AG04450 (cell line): ENCODE measurements at regions of chr10 and their contacts with region 1.

Region 1: DNA sequence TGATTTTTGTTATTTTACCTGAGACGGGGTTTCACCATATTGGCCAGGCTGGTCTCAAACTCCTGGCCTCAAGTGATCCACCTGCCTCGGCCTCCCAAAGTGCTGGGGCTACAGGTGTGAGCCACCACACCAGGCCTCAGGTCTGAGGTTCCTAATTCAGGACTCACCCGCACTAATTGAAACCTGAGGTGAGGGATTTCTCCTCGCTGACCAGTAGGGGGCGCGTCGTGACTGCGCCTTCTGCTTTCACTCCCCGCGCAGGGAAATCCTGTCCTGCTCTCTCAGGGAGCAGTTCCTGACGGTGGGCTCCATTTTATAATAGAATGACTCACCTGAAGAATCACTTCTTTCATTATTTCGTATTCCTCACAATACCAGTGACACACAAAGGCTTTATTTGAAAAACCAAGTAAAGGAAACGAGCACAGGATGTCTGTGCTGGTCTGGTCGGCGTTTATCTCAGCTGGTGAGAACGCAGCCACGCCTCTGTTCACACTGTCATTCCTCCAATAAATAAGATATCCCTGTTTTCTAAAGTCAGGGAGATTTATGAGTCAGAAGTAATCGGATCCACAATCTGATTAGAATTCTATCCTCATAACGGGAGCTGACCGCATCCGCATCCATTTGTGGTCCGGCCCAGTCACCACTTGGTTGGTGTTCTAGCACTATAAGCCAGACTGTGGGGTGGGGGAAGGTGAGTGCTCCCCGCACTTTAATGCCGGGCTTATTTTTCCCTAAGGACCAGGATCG is 35.4 kb downstream of the BAG3 start:
- DNase-seq: peak; percentile 69
- H3K4me3 ChIP-seq: peak overlapping the region; percentile 54
- H3K27ac ChIP-seq: peak overlapping the region; percentile 81
- H3K27me3 ChIP-seq: no peaks in the 10 kb centered on the region
- CTCF ChIP-seq: peak; percentile 86

Region 2: GRCh38 chr10:119478811-119479341 is 207.7 kb before region 1 on chr10:
- CTCF ChIA-PET with region 1: no interaction called
- POLR2A ChIA-PET with region 1: no interaction called
- DNase-seq: no peak
- H3K4me3 ChIP-seq: no peak overlapping the region
- H3K27ac ChIP-seq: no peak overlapping the region
- H3K27me3 ChIP-seq: peaks cover 39% of the 10 kb centered on the region
- CTCF ChIP-seq: no peak

Region 3: DNA sequence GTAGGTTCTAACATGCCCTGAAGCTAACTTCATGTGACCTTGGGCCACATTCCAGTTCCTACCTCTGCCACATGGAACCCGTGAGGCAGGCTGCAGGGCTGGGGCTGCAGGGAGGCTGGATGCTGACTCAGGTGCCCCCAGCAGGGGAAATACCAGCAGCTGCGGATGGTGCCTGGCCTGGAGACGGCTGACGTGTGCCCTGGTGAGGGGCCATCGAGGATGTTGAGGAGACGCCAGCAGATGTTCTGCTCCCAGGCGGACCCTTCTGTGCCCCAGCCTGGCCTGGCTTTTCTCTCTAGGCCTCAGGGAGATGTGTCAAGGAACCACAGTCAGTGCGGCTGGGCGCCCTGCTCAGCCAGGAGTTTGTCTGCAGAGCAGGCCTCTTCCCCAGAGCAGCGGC is 26.7 kb before region 1 on chr10:
- CTCF ChIA-PET with region 1: no interaction called
- POLR2A ChIA-PET with region 1: no interaction called
- DNase-seq: no peak
- H3K4me3 ChIP-seq: no peak overlapping the region
- H3K27ac ChIP-seq: no peak overlapping the region
- H3K27me3 ChIP-seq: no peaks in the 10 kb centered on the region
- CTCF ChIP-seq: no peak

Region 4: DNA sequence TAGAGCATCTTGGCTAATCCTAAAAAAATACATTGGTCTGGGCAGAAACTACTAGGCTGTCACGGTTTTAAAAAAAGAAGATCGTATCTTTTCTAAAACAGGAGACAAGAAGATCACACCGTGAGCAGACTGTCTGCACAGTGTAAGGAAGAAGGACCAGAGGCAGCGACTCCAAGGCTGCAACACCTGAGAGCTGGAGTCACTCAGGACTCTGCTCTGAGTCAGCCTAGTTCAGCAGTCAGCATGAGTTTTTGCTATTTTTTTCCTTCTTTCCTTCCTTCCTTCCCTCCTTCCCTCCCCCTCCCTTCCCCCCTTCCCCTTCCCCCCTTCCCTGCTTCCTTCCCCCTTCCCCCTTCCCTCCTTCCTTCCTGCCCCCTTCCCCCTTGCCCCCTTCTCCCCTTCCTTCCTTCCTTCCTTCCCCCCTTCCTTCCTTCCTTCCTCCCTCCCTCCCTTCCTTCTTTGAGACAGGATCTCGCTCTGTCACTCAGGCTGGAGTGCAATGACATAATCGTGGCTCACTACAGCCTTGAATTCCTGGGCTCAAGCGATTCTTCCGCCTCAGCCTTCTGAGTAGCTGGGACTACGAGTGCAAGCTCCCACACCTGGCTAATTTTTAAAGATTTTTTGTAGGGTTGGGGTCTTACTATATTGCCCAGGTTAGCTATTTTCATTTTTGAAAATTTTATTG is 11.0 kb before region 1 on chr10:
- CTCF ChIA-PET with region 1: interaction called, 12 read pairs
- POLR2A ChIA-PET with region 1: no interaction called
- DNase-seq: no peak
- H3K4me3 ChIP-seq: no peak overlapping the region
- H3K27ac ChIP-seq: no peak overlapping the region
- H3K27me3 ChIP-seq: no peaks in the 10 kb centered on the region
- CTCF ChIP-seq: no peak

Region 5: DNA sequence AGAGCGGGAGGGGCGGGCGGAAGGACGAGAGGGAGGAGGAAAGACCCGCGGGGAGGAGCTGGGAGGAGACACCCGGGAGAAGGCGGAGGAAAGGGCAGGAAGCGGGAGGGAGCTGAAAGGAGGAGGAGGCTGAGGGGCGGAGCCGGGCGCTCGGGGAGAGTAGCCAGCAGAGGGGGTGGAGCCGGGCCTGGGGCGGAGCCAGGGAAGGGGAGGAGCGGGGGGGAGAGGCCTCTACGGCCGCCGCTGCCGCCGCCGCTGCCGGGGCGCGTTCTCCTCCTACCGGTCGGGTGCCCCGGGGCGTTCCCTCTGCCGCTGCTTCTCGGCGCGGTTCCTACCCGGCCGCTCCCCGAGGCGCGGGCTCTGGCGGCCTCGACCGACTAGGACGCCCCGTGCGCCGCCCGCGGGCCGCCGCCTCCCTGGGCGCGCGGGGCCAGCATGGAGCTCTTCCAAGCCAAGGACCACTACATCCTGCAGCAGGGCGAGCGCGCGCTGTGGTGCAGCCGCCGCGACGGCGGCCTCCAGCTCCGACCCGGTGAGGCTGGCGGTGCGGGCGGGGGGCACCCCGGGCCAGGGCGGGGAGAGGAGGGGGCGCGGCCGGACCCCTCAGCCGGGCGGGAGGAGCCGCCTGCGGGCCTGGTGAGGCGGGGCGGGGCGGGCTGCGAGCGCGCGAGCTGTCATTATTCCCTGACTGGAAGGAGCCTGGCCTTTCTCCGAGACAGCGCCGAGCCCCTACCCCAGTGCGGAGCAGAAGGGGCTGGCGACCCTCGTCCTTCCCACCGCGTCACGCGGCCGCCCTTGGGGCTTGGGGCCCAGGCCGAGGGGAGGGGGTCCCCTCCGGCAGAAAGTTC is 39.4 kb after region 1 on chr10 and contains the start of gene INPP5F:
- CTCF ChIA-PET with region 1: interaction called, 20 read pairs
- POLR2A ChIA-PET with region 1: interaction called, 5 read pairs
- DNase-seq: peak; percentile 92
- H3K4me3 ChIP-seq: peak within 1 kb of the TSS; percentile 71
- H3K27ac ChIP-seq: peak within 1 kb of the TSS; percentile 65
- H3K27me3 ChIP-seq: no peaks in the 10 kb centered on the region
- CTCF ChIP-seq: peak; percentile 21; the same call in 1 of the 2 replicates
- polyA plus RNA-seq, gene INPP5F: 21.8 and 22.3 TPM in 2 replicates